ENCODE measurements at regions of chr1 and their contacts with region 1.

Region 1: GRCh38 chr1:26516987-26517765 is 12.4 kb upstream of the RPS6KA1 start:
- DNase-seq: no peak
- H3K4me3 ChIP-seq: no peak overlapping the region
- H3K27ac ChIP-seq: no peak overlapping the region
- H3K4me1 ChIP-seq: no peaks in the 10 kb centered on the region
- H3K27me3 ChIP-seq: no peaks in the 10 kb centered on the region
- CTCF ChIP-seq: no peak
- POLR2A ChIP-seq: no peak

Region 2: GRCh38 chr1:26959722-26960615 is 442.8 kb after region 1 on chr1 and contains the start of gene KDF1:
- intact Hi-C with region 1: loop called (anchors 5 kb)
- DNase-seq: peak; percentile 63 to 83
- H3K4me3 ChIP-seq: peak within 1 kb of the TSS; percentile 6 to 86 (median 84)
- H3K27ac ChIP-seq: peak within 1 kb of the TSS; percentile 87 to 88
- H3K4me1 ChIP-seq: peaks cover 0 to 9% of the 10 kb centered on the region in 2 donors
- H3K27me3 ChIP-seq: peaks cover 0 to 9% of the 10 kb centered on the region in 2 donors
- CTCF ChIP-seq: peak; percentile 36 to 61 (median 44)
- POLR2A ChIP-seq: peak; percentile 40
- total RNA-seq, gene KDF1: 10.8 to 22.2 TPM in 2 of 3 donors, not detected in the other

Measured in breast epithelium (tissue), 4 donors.